ENCODE measurements at regions of chr14 and their contacts with region 1.

Region 1: DNA sequence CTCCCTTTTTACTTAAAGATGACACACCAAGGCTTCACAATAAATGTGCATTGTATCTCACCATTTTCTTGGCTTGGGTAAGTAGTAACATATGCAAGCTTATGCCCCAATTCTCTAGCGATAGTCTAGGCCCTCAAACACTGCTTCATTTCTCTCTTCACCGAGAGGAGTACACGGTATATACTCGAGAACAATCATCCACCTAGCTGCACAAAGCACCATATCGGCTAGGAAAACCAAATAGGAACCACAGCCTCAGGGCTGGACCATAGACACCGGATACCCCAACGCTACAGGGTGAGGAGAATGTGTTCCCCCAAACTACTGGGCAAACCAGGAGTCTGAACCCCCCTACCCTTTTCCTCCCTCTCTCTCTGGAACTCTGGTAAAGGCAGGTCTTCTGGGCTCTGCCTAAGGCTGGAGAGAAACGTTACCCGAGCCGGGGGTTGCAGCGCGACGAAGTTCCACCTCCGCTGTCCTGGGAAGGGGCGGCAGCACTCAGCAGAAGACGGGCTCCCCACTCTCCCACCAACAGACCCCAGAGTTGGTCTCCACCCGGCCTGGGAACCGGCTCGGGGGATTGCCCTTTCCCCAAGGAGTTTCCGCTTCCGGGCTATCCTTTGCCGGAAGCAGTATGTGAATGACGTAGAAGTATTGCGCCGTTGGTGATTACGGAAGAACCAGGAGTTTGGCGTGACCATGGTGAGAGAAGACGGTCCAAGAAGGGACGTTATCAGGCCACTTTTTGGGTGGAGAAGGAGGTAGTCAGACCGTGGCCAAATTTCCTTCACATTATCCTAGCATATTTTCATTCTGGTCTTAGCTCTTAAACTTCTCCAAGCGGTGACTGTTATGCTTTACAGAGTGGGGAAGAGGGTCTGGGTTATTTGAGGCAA is at the starts of genes AREL1 and FCF1:
- DNase-seq: peak; percentile 79
- ATAC-seq: peak; percentile 98
- total RNA-seq, gene AREL1: 22.7 TPM
- total RNA-seq, gene FCF1: 37.6 TPM

Region 2: DNA sequence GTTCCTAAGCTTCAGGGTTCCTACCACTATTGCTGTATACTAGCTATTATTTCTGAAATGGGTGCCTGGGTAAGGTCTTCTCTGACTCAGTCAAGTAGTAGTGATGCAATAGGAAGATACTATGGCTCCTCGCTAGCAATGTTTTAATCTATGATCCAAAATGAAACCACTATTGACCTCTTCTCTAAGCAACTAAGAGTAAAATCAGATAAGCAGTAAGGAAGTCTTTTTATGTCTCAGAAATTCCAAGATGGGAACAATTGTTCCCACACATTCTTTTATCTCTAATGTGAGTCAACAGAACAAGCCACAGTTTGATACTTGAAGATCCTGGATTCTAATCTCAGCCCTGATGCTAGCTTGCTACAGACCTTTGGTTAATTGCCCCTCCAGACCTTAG is 45.0 kb before region 1 on chr14:
- intact Hi-C with region 1: no loop called
- DNase-seq: no peak
- ATAC-seq: no peak

Region 3: DNA sequence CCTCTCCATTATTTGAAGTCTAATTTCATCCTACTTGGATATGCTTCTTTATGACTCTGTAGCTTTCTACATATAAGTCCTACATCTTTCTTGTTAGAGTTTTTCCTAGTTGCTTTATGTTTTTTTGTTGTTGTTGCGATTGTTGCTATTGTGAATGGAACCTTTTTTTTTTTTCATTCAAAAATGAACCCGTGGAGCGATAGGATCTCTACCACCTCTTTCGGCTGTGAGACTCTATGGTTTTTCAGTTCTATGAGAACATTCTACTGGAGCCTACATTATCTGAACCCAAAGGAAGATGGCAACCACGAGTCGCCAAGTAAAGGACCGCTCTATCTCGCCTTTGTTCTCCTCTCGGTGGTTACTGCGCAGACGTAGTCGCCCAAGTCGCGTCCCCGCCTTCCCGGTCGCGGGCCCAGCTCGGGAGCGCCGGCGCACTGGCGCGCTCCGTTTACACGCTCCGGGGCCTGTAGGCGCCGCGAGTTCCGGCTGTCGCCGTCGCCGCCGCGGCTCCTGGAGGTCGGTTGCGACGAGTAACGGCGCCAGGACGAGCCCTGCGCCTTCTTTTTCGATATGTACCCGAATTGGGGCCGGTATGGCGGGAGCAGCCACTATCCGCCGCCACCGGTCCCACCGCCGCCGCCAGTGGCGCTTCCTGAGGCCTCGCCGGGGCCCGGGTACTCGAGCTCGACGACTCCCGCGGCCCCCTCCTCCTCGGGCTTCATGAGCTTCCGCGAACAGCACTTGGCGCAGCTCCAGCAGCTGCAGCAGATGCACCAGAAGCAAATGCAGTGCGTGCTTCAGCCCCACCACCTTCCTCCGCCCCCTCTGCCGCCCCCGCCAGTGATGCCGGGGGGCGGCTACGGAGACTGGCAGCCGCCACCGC is 50.4 kb after region 1 on chr14 and contains the start of gene YLPM1:
- intact Hi-C with region 1: loop called (anchors 1 kb)
- DNase-seq: peak; percentile 97
- ATAC-seq: peak; percentile 100
- total RNA-seq, gene YLPM1: 27.1 TPM

Region 4: DNA sequence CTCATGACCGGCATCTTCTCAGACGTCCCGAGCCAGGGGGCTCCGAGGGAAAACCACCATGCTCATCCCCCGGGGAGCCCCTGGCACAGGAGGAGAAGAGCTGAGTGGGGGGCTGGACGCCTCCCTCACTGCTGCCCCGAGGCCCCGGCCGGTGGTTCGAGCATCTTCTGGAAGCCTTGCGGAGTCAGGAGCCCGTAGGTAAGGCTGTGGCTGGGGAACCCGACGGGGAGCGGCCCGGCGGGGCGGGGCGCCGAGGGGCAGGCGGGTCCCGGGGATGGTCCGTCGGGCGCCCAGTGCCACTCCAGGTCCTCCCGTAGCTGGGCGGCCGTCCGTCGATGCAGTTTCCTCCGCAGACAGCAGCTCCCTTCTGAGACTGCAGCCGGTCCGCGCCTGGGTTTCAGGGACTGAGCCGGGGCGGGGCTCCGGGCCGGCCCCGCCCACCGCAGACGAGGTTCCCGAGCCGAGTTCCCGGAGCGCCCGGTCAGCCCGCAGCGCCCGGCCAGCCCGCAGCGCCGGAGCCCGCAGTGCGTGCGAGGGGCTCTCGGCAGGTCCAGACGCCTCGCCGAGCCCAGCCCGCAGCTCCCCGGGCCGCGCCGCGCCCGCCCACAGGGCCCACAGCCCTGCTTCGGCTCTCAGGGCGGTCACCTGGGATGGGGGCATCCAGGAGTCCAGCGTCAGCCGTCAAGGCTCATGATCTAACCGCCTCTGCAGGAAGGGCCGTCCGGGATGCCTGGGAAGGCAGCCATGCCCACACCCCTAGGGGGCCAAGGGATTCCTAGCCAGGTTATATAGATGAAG is 242.7 kb after region 1 on chr14 and contains the start of gene PGF:
- intact Hi-C with region 1: no loop called
- DNase-seq: peak; percentile 84
- ATAC-seq: peak; percentile 83
- total RNA-seq, gene PGF: 6.5 TPM

Region 5: GRCh38 chr14:75044322-75044721 is 331.6 kb after region 1 on chr14:
- intact Hi-C with region 1: no loop called
- DNase-seq: no peak
- ATAC-seq: no peak

Measured in Right ventricle myocardium inferior (tissue), 1 donor.